Cardiac septum (tissue), 1 donor: ENCODE measurements at regions of chr2 and their contacts with region 1.

Region 1: GRCh38 chr2:106193977-106194778 is at the start of gene UXS1:
- DNase-seq: peak; percentile 100
- total RNA-seq, gene UXS1: 23.3 TPM

Region 2: DNA sequence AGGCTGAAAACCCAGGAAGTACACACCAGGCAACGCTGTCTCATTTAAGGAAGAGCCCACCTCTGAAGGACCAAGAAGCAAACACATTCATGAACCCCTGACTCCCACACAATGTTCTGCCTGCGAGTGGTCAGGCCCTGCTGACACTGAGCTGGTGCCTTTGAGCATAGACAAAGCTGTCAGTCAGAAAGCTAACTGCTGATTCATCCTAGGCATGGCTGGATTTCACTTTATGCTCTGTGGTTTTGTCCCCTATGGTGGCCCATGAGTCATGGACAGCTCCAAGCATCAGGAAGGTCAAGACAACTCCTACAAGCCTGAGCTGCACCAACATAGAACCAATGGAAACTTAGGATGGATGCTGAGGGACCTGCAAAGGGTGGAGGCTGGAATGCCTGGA is 78.9 kb before region 1 on chr2:
- intact Hi-C with region 1: loop called (anchors 5 kb)
- DNase-seq: no peak

Region 3: DNA sequence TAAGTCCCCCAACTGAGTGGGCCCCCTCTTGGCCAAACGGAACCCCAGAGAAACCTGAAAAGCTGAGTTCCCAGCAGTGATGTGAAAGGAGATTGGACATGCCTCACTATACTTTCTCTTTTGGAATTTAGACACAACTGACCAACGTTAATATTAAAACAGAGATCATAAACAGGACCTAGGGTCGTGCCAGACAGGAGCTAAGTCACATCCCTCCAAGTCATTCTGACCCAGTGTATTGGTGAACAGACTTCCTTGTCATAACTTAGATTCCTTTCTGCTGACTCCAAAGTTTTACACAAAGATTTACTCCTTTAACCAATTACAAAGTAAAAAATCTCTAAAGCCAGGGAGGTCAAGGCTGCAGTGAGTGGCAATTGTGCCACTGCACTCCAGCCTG is 47.0 kb before region 1 on chr2:
- intact Hi-C with region 1: no loop called
- DNase-seq: no peak

Region 4: GRCh38 chr2:106160786-106161261 is 33.4 kb before region 1 on chr2:
- intact Hi-C with region 1: loop called (anchors 2 kb)
- DNase-seq: no peak